ENCODE measurements at regions of chr1 and their contacts with region 1.

Region 1: DNA sequence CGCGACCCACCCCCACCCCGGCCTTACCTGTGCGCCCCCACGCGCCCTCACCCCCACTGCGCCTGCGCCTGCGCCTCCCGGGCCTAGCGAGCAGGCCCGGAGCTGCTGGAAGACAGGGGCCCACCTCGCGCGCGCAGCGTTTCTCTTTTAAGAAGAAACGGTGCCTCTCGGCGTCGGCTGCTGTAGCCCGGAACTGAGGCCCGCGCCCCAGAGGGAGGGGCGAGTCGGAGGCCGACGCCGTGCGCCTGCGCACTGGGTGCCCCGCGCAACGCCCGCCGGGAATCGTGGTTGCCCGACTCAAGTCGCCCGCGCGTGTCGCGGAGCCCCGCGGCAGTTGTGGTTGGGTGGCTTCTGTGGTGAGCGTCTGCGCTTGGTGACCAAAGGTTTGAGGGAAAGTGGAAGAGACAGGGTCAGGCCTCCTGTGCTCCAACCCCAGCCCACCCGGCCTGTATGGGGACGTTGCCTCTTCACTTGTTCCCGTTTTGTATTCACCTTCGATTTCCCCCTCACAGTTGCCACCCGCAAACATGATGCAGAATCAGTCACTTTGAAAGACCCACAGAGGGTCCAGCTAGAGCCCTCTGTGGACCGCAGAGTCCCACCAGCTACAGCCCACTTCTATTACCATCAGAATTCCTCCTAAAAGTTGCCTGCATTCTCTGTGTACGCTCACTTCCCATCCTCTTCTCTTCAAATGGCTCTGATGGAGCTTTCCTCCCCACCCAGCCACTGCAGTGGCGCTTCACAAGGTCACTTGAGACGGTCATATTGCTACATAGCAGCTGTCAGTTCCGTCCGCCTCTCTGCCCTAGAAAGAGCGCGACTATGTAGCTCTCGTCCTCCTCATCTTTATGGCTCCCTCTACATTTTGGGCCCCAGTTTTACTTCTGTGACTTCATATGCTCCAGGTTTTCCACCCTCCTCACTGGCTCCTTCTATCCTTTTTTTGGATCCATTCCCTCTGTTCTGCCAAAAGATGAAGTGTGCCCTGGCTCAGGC is at the start of gene ZNF692:
- DNase-seq: peak; percentile 96
- H3K4me3 ChIP-seq: peak within 1 kb of the TSS; percentile 18 to 68 (median 39)
- H3K27ac ChIP-seq: peak within 1 kb of the TSS; percentile 22
- H3K4me1 ChIP-seq: peaks cover 23% of the 10 kb centered on the region
- H3K27me3 ChIP-seq: peaks cover 2 to 4% of the 10 kb centered on the region in 2 experiments
- CTCF ChIP-seq: no peak
- POLR2A ChIP-seq: peak; percentile 98
- total RNA-seq, gene ZNF692: 36.6 and 38.6 TPM in 2 replicates

Region 2: GRCh38 chr1:248825909-248826760 is 33.1 kb before region 1 on chr1 and contains the start of gene SH3BP5L:
- CTCF ChIA-PET with region 1: interaction called, 10 read pairs
- POLR2A ChIA-PET with region 1: no interaction called
- dilution Hi-C with region 1: no loop called
- intact Hi-C with region 1: loop called (anchors 1 kb)
- DNase-seq: peak; percentile 96
- H3K4me3 ChIP-seq: peak within 1 kb of the TSS; percentile 51 to 78 (median 73)
- H3K27ac ChIP-seq: peak within 1 kb of the TSS; percentile 89
- H3K4me1 ChIP-seq: peaks cover 45% of the 10 kb centered on the region
- H3K27me3 ChIP-seq: no peaks in the 10 kb centered on the region
- CTCF ChIP-seq: peak; percentile 62 to 69
- POLR2A ChIP-seq: peak; percentile 59
- total RNA-seq, gene SH3BP5L: 24.7 and 26.5 TPM in 2 replicates

Region 3: GRCh38 chr1:248873409-248873992 is 14.3 kb after region 1 on chr1:
- CTCF ChIA-PET with region 1: interaction called, 16 read pairs
- POLR2A ChIA-PET with region 1: interaction called, 4 read pairs
- dilution Hi-C with region 1: no loop called
- intact Hi-C with region 1: loop called (anchors 1 kb)
- DNase-seq: peak; percentile 99
- H3K4me3 ChIP-seq: peak overlapping the region; percentile 49 to 81 (median 62)
- H3K27ac ChIP-seq: peak overlapping the region; percentile 76
- H3K4me1 ChIP-seq: no peaks in the 10 kb centered on the region
- H3K27me3 ChIP-seq: peaks cover 0 to 3% of the 10 kb centered on the region in 2 experiments
- CTCF ChIP-seq: peak in 1 of 2 donors; percentile 9
- POLR2A ChIP-seq: no peak

Measured in endothelial cell of umbilical vein (primary cell).